HEK293 (cell line): ENCODE measurements at regions of chr1 and their contacts with region 1.

Region 1: DNA sequence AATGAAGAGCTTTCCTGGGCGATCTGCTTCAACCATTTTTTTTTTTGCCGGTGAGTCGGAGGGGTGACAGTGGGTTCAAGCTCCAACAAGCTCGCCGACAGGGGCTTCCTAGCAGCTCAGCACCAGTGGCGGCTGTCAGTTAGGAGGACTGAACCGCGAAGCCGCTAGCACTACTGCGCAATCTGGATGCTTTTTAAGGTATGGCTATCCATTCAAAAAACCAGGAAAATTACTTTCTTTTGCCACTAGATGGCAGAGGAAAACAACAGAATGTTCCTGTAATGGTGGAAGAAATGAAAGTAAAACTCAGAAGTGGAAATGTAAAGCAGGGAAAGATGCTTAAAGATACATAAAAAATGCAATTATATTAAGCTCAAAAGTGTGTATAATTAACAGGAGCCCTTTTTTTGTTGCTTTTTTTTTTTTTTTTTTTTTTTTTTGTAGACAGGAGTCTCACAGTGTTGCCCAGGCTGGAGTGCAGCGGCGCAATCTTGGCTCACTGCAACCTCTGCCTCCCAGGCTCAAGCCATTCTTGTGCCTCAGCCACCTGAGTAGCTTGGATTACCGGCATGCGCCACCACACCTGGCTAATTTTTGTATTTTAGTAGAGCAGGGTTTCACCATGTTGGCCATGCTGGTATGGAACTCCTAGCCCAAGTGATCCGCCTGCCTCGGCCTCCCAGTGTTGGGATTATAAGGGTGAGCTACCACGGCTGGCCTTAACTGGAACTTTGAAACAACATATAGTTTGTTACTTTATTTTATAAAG is 8.5 kb downstream of the KYAT3 start:
- H3K4me3 ChIP-seq: no peak overlapping the region
- H3K27ac ChIP-seq: no peak overlapping the region
- H3K4me1 ChIP-seq: peaks cover 17% of the 10 kb centered on the region
- CTCF ChIP-seq: no peak

Region 2: DNA sequence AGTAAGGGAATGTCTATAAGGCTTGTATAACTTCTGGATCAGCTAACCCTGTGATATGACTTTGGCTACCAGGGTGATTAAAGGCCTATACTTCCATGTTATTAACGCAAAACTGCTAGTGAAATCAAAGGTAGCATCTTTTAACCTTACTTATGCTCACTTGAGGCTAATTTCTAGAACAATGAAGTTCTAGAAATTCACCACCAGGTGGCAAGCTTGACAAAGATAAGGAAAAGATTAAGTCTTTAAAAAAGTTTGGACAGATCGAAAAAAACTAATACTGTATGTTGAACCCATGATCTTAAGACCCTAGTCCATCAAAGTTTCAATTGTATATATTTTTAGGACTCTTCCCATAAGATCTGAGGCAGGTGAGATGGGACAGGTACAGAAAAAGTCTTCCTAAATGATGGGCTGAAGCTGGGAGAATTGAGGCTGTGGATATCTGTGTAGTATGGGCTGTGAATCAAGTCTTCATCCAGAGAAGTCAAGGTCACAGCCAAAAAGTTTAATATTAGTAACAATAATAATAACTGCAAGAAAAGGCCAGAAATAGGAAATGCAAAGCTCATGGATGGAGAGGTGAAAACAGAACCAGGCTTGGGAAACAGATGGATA is 10.3 kb before region 1 on chr1:
- CTCF ChIA-PET with region 1: interaction called, 24 read pairs
- POLR2A ChIA-PET with region 1: interaction called, 5 read pairs
- H3K4me3 ChIP-seq: no peak overlapping the region
- H3K27ac ChIP-seq: no peak overlapping the region
- H3K4me1 ChIP-seq: no peaks in the 10 kb centered on the region
- CTCF ChIP-seq: no peak